ENCODE measurements at regions of chr17 and their contacts with region 1.

Region 1: DNA sequence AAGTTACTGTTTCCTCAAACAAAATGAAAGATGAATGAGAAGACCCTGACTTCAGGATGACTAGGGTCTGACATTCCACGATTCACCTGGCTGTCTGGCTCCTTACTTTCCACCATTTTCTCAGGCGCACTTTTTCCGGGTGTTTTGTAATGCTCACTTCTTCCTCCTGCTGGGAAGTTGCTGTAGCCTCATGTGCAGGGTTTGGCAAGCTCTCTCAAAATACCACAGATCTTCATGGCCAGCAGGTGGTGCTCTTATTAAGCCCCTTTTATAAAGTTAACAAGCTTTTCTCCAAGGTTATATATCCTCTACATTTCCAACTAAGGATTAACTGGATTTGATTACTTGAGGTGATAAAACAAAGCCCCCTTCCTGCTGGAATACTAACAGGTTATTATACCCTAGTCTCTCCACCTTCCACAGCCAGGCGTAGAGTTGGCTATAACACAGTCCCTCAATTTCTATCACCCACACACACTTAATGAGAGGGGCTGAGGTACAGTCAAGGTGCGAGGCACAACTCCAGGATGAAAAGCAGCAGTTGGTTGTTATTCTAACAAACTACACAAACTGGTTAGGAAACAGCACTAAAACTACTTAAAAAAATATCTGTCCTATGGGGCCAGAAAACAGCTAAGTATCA is 45.4 kb downstream of the STH start:
- DNase-seq: peak; percentile 61
- H3K4me3 ChIP-seq: no peak overlapping the region
- CTCF ChIP-seq: peak; percentile 74

Region 2: DNA sequence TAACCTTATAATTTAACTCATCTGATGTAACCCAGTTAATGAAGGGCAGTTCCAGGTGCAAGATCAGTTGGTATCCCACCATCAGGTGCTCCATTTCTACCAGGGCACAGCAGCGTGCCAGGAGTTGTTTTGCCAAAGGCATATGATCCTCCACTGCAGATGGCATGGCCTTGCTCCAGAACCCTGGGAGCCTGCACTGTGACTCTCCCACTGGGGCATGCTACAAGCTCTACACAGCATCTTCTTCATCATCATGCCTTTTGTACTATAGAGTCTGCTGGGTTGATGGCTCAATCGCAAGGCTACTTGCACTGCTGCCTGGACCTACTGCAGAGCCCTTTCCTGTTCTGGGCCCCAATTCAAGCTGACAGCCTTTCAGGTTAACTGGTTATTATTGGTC is 161.3 kb before region 1 on chr17:
- CTCF ChIA-PET with region 1: no interaction called
- POLR2A ChIA-PET with region 1: no interaction called
- DNase-seq: no peak
- H3K4me3 ChIP-seq: no peak overlapping the region
- CTCF ChIP-seq: no peak

Region 3: GRCh38 chr17:46002311-46002972 is 42.0 kb before region 1 on chr17:
- CTCF ChIA-PET with region 1: interaction called, 25 read pairs
- POLR2A ChIA-PET with region 1: no interaction called
- DNase-seq: no peak
- H3K4me3 ChIP-seq: no peak overlapping the region
- CTCF ChIP-seq: peak; percentile 69

Region 4: GRCh38 chr17:46061435-46061834 is 17.0 kb after region 1 on chr17:
- CTCF ChIA-PET with region 1: interaction called, 131 read pairs
- POLR2A ChIA-PET with region 1: interaction called, 3 read pairs
- DNase-seq: no peak
- H3K4me3 ChIP-seq: no peak overlapping the region
- CTCF ChIP-seq: no peak

Region 5: DNA sequence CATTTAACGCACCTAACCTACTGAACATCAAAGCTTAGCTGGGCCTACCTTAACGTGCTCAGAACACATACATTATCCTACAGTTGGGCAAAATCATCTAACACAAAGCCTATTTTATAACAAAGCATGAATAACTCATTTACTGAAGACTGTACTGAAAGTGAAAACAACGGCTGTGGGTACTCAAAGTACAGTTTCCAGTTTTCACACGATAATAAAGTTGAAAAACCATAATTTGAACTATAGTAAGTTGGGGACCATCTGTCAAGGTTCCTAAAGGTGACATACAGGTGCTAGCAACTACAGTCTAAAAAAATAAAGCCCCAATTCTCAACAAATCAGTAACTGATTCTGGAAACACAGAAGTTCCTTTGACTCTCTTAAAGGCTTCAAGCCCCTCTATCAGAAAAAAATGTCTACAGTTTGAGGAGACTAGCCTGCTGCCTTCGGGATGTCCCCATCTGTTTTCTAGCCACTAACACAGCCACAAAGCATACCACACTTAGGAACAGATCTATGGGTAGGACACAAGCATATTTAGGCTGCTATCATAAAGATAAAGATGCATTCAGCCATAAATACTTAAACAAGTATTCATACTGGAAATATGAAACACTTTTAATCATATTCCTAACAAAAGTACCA is 77.6 kb after region 1 on chr17:
- CTCF ChIA-PET with region 1: no interaction called
- POLR2A ChIA-PET with region 1: no interaction called
- DNase-seq: no peak
- H3K4me3 ChIP-seq: no peak overlapping the region
- CTCF ChIP-seq: no peak

Region 6: GRCh38 chr17:46184696-46185095 is 140.3 kb after region 1 on chr17:
- CTCF ChIA-PET with region 1: interaction called, 42 read pairs
- POLR2A ChIA-PET with region 1: no interaction called
- DNase-seq: no peak
- H3K4me3 ChIP-seq: no peak overlapping the region
- CTCF ChIP-seq: no peak

Region 7: GRCh38 chr17:46205975-46206374 is 161.6 kb after region 1 on chr17:
- CTCF ChIA-PET with region 1: interaction called, 87 read pairs
- POLR2A ChIA-PET with region 1: no interaction called
- DNase-seq: no peak
- H3K4me3 ChIP-seq: no peak overlapping the region
- CTCF ChIP-seq: no peak